K562 (cell line): ENCODE measurements at regions of chr15 and their contacts with region 1.

Region 1: GRCh38 chr15:82647045-82647834 is at the start of gene CPEB1:
- DNase-seq: peak; percentile 87 to 93 (median 91)
- ATAC-seq: peak; percentile 61
- H3K4me3 ChIP-seq: peak within 1 kb of the TSS; percentile 44
- H3K27ac ChIP-seq: peak within 1 kb of the TSS; percentile 90
- H3K4me1 ChIP-seq: peaks cover 42 to 60% of the 10 kb centered on the region in 2 experiments
- H3K27me3 ChIP-seq: no peaks in the 10 kb centered on the region
- CTCF ChIP-seq: peak; percentile 32 to 44 (median 42); a peak in 5 of 6 replicates
- EP300 ChIP-seq: no peak; the same call in 1 of the 2 replicates
- POLR2A ChIP-seq: no peak
- RAD21 ChIP-seq: peak in 1 of 2 experiments; percentile 35; a peak in 2 of 4 replicates
- polyA plus RNA-seq, gene CPEB1: 2.2 to 2.8 TPM

Region 2: GRCh38 chr15:82540055-82540983 is 106.9 kb before region 1 on chr15 and contains the start of gene RPS17:
- CTCF ChIA-PET with region 1: no interaction called
- POLR2A ChIA-PET with region 1: interaction called, 12 read pairs
- in situ Hi-C with region 1: no loop called
- intact Hi-C with region 1: loop called (anchors 2 kb)
- DNase-seq: peak; percentile 98 to 99 (median 98)
- ATAC-seq: peak; percentile 93
- H3K4me3 ChIP-seq: peak within 1 kb of the TSS; percentile 95
- H3K27ac ChIP-seq: peak within 1 kb of the TSS; percentile 93
- H3K4me1 ChIP-seq: peaks cover 10 to 17% of the 10 kb centered on the region in 2 experiments; a peak in 4 of 5 replicates
- H3K27me3 ChIP-seq: no peaks in the 10 kb centered on the region
- CTCF ChIP-seq: peak; percentile 96 to 98 (median 97)
- EP300 ChIP-seq: peak; percentile 25; the same call in 1 of the 2 replicates
- POLR2A ChIP-seq: peak; percentile 99
- RAD21 ChIP-seq: peak; percentile 45 to 57
- polyA plus RNA-seq, gene RPS17: 1,988 to 2,233 TPM

Region 3: DNA sequence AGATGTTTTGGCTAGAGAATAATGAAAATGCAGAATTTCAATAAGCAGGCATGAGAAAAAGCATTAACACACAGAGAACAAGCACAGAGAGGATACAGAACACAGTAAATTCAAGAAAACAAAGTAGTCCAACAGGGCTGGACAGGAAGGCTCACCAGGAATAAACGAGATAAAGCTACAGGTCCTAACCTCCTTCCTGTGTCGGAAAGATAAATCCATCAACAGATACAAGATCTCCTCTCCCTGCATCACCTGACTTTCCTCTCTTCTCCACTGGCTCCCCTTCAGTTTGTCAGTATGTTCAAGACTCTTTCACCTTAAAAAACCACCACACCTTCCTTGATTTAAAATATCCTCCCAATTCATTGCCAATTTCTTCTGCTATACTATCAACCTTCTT is 11.4 kb before region 1 on chr15:
- CTCF ChIA-PET with region 1: no interaction called
- POLR2A ChIA-PET with region 1: interaction called, 12 read pairs
- in situ Hi-C with region 1: no loop called
- intact Hi-C with region 1: no loop called
- DNase-seq: peak in 2 of 4 experiments; percentile 65 to 78
- ATAC-seq: peak; percentile 80
- H3K4me3 ChIP-seq: no peak overlapping the region
- H3K27ac ChIP-seq: peak overlapping the region; percentile 33
- H3K4me1 ChIP-seq: peaks cover 10 to 27% of the 10 kb centered on the region in 2 experiments
- H3K27me3 ChIP-seq: no peaks in the 10 kb centered on the region
- CTCF ChIP-seq: no peak
- EP300 ChIP-seq: peak; percentile 80; the same call in 1 of the 2 replicates
- POLR2A ChIP-seq: no peak
- RAD21 ChIP-seq: no peak

Region 4: DNA sequence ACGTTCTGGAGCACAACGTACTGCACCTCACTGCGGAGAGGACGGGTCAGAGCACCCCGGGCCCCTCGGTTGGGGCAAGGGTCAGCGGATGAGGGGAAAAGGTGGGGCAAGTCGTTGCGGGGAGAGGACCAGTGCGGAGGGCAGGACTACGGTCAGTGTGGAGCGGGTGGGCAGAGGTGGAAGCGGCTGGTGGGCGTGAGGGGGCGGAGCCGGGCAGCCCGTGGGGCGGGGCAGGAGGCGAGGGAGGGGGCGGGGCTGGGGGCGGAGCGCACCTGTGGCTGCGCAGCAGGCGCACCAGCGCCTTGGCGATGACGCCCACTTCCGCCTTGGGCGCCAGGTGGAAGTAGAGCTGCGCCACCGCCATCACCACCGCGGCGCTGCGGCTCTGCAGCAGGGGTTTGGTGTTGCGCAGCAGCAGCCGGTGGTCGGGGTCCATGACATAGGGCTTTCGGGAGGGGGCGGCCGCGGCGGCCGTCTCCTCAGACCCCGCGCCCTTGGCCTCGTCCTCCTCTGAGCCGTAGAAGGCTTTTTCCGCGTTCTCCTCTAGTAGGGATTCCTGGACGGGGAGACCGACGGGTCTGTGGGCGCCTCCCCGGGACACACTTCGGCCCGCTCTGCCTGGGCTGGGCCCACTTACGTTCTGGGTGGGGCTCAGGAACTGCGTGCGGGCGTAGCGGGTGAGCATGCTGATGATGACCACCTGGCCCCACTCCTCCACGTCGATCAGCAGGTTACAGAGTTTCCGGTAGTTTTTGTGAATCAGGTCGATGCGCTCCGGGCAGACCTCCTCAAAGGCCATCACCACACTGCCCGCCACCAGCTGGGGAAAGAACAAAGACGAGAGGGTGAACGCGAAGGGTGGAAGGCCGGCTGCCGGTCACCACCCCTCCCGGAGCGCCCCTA is 33.2 kb after region 1 on chr15:
- CTCF ChIA-PET with region 1: no interaction called
- POLR2A ChIA-PET with region 1: no interaction called
- in situ Hi-C with region 1: no loop called
- intact Hi-C with region 1: loop called (anchors 2 kb)
- DNase-seq: peak; percentile 92 to 98 (median 96)
- ATAC-seq: peak; percentile 98
- H3K4me3 ChIP-seq: peak overlapping the region; percentile 85
- H3K27ac ChIP-seq: peak overlapping the region; percentile 70
- H3K4me1 ChIP-seq: peaks cover 14 to 23% of the 10 kb centered on the region in 2 experiments; a peak in 4 of 5 replicates
- H3K27me3 ChIP-seq: peaks cover 0 to 9% of the 10 kb centered on the region in 2 experiments; a peak in 1 of 5 replicates
- CTCF ChIP-seq: peak; percentile 45 to 72 (median 56); a peak in 5 of 6 replicates
- EP300 ChIP-seq: no peak
- POLR2A ChIP-seq: peak; percentile 91
- RAD21 ChIP-seq: peak in 1 of 2 experiments; percentile 49; a peak in 2 of 4 replicates

Region 5: DNA sequence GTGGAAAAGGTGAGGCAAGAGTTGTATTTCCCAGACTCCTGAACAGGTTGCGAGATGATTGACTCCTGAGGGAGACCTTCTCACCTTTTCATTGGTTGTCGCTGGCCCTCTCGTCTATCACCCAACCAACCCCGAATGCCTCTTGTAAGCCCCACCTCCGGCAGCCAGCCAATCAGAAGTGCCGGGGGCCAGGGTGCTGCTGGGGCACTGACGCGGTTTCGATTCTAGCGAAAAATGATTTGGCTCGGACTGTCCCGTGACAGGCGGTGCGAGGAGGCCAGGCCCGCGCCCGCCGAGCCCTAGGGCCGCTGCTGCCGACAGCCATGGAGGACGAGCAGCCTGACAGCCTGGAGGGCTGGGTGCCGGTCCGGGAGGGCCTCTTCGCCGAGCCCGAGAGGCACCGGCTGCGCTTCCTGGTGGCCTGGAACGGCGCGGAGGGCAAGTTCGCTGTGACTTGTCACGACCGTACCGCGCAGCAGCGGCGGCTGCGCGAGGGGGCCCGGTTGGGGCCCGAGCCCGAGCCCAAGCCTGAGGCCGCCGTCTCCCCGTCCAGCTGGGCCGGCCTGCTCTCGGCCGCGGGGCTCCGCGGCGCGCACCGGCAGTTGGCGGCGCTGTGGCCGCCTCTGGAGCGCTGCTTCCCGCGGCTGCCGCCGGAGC is 162.3 kb after region 1 on chr15 and contains the start of gene WHAMM:
- CTCF ChIA-PET with region 1: no interaction called
- POLR2A ChIA-PET with region 1: interaction called, 3 read pairs
- in situ Hi-C with region 1: no loop called
- intact Hi-C with region 1: loop called (anchors 10 kb)
- DNase-seq: peak; percentile 98 to 99 (median 98)
- ATAC-seq: peak; percentile 96
- H3K4me3 ChIP-seq: peak within 1 kb of the TSS; percentile 94
- H3K27ac ChIP-seq: peak within 1 kb of the TSS; percentile 93
- H3K4me1 ChIP-seq: peaks cover 12 to 21% of the 10 kb centered on the region in 2 experiments; a peak in 4 of 5 replicates
- H3K27me3 ChIP-seq: no peaks in the 10 kb centered on the region
- CTCF ChIP-seq: peak in 2 of 3 experiments; percentile 19 to 44; a peak in 2 of 6 replicates
- EP300 ChIP-seq: no peak
- POLR2A ChIP-seq: peak; percentile 91
- RAD21 ChIP-seq: no peak
- polyA plus RNA-seq, gene WHAMM: 2.0 to 2.3 TPM